ENCODE measurements at regions of chr22 and their contacts with region 1.

Region 1: GRCh38 chr22:39117585-39118191 is 20.6 kb downstream of the APOBEC3H start:
- DNase-seq: peak; percentile 85
- H3K4me3 Mint-ChIP-seq: no peak overlapping the region
- H3K27ac Mint-ChIP-seq: peak overlapping the region; percentile 48
- H3K4me1 Mint-ChIP-seq: peaks cover 36% of the 10 kb centered on the region
- H3K27me3 Mint-ChIP-seq: no peaks in the 10 kb centered on the region

Region 2: DNA sequence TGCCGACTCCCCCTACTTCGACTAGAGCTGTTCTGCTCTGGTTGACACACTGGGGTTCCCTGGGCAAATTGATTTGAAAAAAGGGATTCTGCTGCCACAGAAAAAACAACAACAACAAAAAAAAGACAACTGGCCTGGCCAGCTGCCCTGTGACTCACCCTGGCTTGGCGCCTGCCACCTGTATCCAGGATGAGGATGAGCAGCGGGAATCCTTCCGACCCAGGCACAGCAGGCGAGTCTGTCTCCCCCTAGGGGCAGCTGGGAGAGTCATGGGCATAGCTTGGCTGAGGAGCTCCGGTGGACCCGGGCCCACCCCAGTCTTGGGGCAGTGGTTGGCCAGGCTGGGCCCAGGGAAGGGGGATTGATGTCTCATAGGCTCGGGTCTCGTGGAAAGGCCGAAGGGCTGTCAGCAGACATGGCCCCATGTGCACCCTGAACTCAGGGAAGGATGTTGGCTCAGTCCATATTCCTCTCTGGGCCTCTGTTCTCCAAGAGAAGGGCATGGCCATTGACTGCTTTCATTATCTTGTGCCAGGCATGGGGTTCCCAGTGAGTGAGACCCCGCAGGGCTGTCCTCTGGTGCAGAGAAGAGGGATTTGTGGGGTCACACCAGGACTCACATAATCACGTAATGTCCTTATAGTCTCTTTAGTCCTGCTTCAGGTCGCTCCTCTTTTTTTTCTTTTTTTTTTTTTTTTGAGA is 351.5 kb before region 1 on chr22:
- CTCF ChIA-PET with region 1: no interaction called
- intact Hi-C with region 1: loop called (anchors 2 kb)
- DNase-seq: peak; percentile 58
- H3K4me3 Mint-ChIP-seq: no peak overlapping the region
- H3K27ac Mint-ChIP-seq: no peak overlapping the region
- H3K4me1 Mint-ChIP-seq: peaks cover 5% of the 10 kb centered on the region
- H3K27me3 Mint-ChIP-seq: no peaks in the 10 kb centered on the region

Region 3: GRCh38 chr22:39003165-39003638 is 114.5 kb before region 1 on chr22:
- CTCF ChIA-PET with region 1: interaction called, 4 read pairs
- intact Hi-C with region 1: loop called (anchors 1 kb)
- DNase-seq: peak; percentile 86
- H3K4me3 Mint-ChIP-seq: no peak overlapping the region
- H3K27ac Mint-ChIP-seq: no peak overlapping the region
- H3K4me1 Mint-ChIP-seq: peaks cover 9% of the 10 kb centered on the region
- H3K27me3 Mint-ChIP-seq: no peaks in the 10 kb centered on the region

Region 4: GRCh38 chr22:39080052-39080762 is 37.5 kb before region 1 on chr22:
- CTCF ChIA-PET with region 1: no interaction called
- intact Hi-C with region 1: loop called (anchors 2 kb)
- DNase-seq: no peak
- H3K4me3 Mint-ChIP-seq: no peak overlapping the region
- H3K27ac Mint-ChIP-seq: no peak overlapping the region
- H3K4me1 Mint-ChIP-seq: peaks cover 29% of the 10 kb centered on the region
- H3K27me3 Mint-ChIP-seq: no peaks in the 10 kb centered on the region

Region 5: DNA sequence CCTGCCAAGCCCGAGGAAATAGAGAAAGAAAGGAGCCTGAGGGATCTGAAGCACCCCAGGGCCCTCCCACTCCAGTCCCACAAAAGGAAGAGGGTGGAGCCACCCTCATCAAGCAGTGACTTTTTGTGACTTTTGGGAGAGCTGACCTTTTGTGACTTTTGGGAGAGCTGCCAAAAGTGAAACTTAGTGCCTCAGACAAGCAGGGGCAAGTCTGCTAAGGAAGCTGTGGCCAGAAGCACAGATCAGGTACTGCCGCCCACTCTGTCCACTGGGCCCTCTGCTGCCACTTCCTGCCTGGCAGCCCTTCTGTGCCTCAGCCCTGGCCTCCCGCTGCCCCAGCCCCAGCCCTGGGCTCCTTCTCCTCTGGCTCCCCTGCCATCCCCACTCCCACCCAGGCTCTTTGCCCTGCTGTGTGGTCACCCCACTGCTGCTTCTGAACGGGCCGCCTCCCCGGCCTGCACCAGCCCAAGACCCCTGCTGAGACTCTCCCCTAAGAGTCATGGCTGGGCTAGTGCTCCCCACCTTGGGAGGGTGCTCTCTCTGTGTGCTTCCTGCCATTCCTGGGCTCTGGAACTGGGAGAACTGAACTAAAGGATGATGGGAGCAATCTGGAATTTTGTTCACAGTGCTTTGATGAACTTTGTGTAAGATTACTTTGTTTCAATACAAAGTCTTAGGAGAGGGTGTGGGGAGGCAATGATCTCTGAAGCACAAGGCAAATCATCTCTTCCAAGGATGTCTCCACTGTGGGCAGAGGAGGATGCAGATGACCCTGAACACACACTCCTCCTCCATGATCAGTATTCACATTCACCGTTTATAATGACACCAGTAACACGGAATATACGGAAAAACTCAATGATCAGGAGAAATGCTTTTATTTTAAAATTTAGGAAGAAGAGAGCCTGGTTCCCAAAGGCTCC is 20.3 kb before region 1 on chr22 and contains the start of gene APOBEC3H:
- CTCF ChIA-PET with region 1: interaction called, 4 read pairs
- intact Hi-C with region 1: loop called (anchors 1 kb)
- DNase-seq: peak; percentile 71
- H3K4me3 Mint-ChIP-seq: peak within 1 kb of the TSS; percentile 67
- H3K27ac Mint-ChIP-seq: peak within 1 kb of the TSS; percentile 84
- H3K4me1 Mint-ChIP-seq: peaks cover 74% of the 10 kb centered on the region
- H3K27me3 Mint-ChIP-seq: no peaks in the 10 kb centered on the region
- total RNA-seq, gene APOBEC3H: 11.9 to 13.2 TPM

Region 6: GRCh38 chr22:39545386-39546365 is 428.0 kb after region 1 on chr22:
- CTCF ChIA-PET with region 1: no interaction called
- intact Hi-C with region 1: no loop called
- DNase-seq: peak; percentile 80
- H3K4me3 Mint-ChIP-seq: no peak overlapping the region
- H3K27ac Mint-ChIP-seq: no peak overlapping the region
- H3K4me1 Mint-ChIP-seq: peaks cover 10% of the 10 kb centered on the region
- H3K27me3 Mint-ChIP-seq: peaks cover 28% of the 10 kb centered on the region